Activated naive CD4-positive, alpha-beta T cell treated with anti-CD3 and anti-CD28 coated beads, Interleukin-2, amount 10 ng/mL, durations not matched to agents 7 days and 5 days (primary cell): ENCODE measurements at regions of chr6 and their contacts with region 1.

Region 1: GRCh38 chr6:3977875-3978711 is 100.8 kb downstream of the FAM217A start:
- DNase-seq: peak; percentile 61
- H3K4me3 Mint-ChIP-seq: no peak overlapping the region
- H3K27ac Mint-ChIP-seq: no peak overlapping the region
- H3K4me1 Mint-ChIP-seq: peaks cover 7% of the 10 kb centered on the region
- H3K27me3 Mint-ChIP-seq: peaks cover 29% of the 10 kb centered on the region

Region 2: DNA sequence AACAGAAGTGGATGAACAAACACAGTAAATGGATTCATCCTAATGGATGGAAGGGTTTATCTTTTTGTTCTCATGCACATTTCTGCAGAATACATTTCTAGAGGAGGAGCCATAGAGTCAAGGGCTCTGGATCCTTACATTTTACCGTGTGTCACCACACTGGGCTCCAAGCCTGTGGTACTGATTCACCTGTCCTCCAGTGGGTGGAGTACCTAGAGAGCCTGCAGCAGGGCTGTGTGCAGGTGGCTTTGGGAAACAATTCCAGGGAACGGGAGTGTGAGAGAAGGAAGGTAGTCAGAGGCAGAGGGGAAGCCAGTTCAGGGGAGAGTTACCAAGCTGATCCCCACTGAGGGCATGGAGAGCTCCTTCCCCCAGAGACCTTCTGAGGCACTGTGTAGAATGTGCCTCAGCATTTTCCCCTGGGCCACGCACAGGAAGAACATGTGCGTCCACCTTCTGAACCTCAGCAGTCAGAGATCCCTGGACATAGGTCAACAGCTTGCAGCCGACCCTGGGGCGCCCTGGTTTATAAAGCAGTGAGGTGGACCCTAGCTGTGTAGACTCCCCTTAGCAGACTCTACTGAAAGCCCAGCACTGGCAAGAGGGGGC is 436.0 kb before region 1 on chr6:
- CTCF ChIA-PET with region 1: no interaction called
- DNase-seq: no peak
- H3K4me3 Mint-ChIP-seq: no peak overlapping the region
- H3K27ac Mint-ChIP-seq: no peak overlapping the region
- H3K4me1 Mint-ChIP-seq: no peaks in the 10 kb centered on the region
- H3K27me3 Mint-ChIP-seq: peaks cover 28% of the 10 kb centered on the region

Region 3: DNA sequence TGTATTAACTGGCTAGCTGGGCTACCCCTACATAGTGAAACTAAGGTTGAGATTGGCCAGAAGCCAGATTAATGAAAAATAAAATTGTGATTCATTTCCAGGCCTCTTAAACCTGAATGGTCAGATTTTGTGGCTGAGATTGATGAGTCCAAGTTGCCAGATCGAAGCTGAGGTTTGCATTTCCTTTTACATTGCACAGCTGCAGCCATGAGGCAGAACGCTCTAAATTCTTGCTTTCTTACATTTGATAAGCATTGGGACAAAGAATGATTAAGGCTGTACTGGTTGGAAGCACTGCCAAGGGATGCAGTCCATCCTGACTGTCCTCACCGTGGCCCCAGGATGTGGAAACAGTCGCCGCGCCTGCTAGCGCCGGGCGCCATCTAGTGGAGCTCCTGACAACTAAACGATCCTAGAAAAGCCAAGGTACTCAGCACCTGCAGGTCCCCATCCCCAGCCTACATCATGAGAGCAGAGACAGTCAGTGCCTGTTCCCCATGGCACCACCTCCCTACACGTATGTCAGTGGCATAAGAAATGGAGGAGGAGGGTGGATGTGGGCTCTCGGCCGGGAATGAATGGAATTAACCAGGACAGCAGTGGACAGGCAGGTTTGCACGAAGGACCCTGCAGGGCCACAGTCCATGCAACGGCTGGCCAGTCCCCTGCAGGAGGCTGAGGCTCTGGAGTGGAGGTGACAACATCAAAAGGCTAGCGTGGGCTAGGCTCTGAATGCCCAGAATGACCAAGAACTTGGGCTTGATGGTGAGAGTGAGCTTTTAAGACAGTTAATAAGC is 245.6 kb before region 1 on chr6:
- CTCF ChIA-PET with region 1: interaction called, 18 read pairs
- DNase-seq: peak; percentile 76
- H3K4me3 Mint-ChIP-seq: no peak overlapping the region
- H3K27ac Mint-ChIP-seq: no peak overlapping the region
- H3K4me1 Mint-ChIP-seq: no peaks in the 10 kb centered on the region
- H3K27me3 Mint-ChIP-seq: peaks cover 31% of the 10 kb centered on the region

Region 4: DNA sequence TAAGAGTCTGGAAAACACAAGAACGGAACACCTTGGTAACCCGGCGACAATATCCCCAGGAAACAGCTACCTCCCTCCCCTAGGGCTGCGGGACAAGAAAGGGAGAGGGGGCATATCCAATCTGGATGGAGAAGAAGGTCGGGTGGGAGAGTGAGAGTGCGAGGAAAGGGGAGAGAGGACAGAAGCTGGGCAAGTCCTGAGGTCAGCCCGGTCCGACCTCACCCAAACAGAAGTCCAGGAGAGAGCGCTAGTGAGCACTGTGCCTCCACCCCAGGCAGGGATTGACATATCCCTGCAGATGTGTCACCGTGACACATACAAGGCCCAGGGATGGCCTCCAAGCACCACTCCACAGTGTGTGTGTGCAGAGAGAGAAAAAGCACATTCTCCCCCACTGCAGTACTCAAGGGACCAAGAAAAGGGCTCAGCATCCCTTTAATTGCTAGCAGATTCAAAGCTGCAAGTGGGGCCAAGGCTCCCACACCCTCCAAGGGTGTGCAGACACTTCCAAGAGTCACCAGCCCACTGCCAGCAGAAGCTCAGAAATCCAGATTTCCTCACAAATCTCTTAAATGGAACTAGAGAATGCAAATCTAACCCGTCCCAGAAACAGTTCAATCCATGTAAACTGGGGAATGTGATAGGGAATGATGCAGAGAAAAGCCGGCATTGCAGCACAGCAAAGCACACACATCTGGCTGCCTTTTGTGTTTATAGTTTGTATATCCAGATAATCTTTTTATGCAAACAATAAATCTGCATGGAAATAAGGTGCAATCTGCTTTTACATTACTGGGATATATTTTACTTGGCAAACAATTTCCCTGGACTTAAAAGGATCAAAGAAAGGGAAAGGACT is 229.7 kb before region 1 on chr6:
- CTCF ChIA-PET with region 1: interaction called, 52 read pairs
- DNase-seq: peak; percentile 61
- H3K4me3 Mint-ChIP-seq: no peak overlapping the region
- H3K27ac Mint-ChIP-seq: no peak overlapping the region
- H3K4me1 Mint-ChIP-seq: peaks cover 6% of the 10 kb centered on the region
- H3K27me3 Mint-ChIP-seq: peaks cover 82% of the 10 kb centered on the region

Region 5: GRCh38 chr6:3960754-3961361 is 17.2 kb before region 1 on chr6:
- CTCF ChIA-PET with region 1: no interaction called
- DNase-seq: no peak
- H3K4me3 Mint-ChIP-seq: no peak overlapping the region
- H3K27ac Mint-ChIP-seq: no peak overlapping the region
- H3K4me1 Mint-ChIP-seq: no peaks in the 10 kb centered on the region
- H3K27me3 Mint-ChIP-seq: peaks cover 7% of the 10 kb centered on the region

Region 6: DNA sequence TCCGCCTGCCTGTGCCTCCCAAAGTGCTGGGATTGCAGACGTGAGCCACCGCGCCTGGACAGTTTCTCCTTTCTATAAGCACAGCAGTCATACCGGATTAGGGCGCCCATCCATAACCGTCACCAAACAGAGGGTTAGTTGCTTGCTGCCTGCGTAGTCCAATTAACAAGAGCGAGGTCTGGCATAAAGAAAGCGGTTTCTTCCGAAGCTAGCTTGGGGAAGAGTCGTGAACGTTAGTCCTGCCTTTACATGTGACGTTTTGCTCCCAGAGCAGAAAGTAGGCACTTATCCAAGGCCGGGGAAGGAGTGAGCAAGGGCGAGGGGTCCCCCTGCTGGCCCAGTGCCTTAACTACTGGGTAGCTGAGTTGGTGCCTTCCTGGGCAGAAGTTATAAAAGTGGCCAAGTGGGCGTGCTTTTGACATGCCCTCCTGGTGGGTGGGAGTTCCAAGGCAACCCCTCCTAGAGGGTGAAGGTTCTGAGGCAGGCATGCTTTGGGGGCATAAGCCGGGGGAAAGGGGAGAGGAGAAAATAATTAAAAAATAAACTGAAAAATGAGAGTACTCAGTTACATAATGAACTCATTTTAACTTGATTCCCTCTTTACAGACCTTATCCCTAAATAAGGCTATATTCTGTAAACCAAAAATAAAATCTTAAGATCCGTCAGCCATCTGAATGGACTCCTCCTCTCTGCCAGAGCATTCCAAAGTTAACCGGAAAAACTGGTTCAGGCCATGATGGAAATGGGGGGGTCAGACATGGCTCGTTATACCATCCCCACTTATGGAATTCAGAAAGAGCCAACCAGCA is 12.8 kb after region 1 on chr6:
- CTCF ChIA-PET with region 1: interaction called, 18 read pairs
- DNase-seq: peak; percentile 80
- H3K4me3 Mint-ChIP-seq: no peak overlapping the region
- H3K27ac Mint-ChIP-seq: no peak overlapping the region
- H3K4me1 Mint-ChIP-seq: peaks cover 5% of the 10 kb centered on the region
- H3K27me3 Mint-ChIP-seq: no peaks in the 10 kb centered on the region

Region 7: GRCh38 chr6:4008324-4009047 is 30.4 kb after region 1 on chr6:
- CTCF ChIA-PET with region 1: interaction called, 11 read pairs
- DNase-seq: no peak
- H3K4me3 Mint-ChIP-seq: no peak overlapping the region
- H3K27ac Mint-ChIP-seq: no peak overlapping the region
- H3K4me1 Mint-ChIP-seq: peaks cover 43% of the 10 kb centered on the region
- H3K27me3 Mint-ChIP-seq: no peaks in the 10 kb centered on the region